GM13976 (cell line): ENCODE measurements at regions of chr3 and their contacts with region 1.

Region 1: GRCh38 chr3:62201438-62202035 is 171.8 kb downstream of the FEZF2 start:
- DNase-seq: peak; percentile 57
- CTCF ChIP-seq: peak; percentile 14

Region 2: DNA sequence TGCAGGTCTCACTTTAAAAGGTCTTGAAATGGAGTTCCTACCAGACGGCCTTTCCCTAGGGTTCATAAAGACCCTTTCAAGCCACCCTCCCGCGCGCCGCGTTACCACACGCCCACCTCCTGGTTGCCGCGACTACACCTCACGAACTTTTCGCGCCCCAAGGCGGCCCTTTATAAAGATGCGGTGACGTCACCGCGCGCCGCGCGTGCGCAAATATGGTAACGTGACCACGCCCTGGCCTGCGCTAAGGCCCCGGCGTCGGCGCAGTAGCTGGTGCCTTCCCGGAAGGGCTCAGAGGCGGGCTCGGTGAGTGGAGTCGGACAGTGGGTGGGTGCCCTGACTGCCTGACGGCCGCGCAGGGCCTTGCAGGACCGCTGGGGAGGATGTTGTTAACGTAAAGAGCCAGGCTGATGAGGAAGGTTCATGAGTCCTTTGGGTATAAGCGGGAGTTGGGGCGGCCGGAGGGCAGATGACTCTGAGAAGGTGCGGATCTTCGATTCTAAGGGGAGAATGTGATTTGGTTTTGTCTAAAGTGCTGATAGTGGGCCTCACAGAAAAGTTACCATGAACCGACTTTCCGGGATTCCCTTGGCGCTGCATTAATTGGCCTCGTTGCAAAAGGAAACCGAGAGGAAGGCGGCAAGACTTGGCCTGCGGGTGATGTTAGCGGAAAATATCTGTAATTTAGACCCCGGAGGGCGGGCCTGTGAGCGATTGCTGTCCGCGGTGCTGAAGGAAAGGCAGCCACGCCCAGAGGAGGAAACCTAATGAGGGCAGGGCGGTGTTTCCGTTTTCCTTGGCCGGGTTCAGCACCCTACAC is 117.4 kb after region 1 on chr3:
- in situ Hi-C with region 1: no loop called
- DNase-seq: peak; percentile 41
- CTCF ChIP-seq: no peak

Region 3: DNA sequence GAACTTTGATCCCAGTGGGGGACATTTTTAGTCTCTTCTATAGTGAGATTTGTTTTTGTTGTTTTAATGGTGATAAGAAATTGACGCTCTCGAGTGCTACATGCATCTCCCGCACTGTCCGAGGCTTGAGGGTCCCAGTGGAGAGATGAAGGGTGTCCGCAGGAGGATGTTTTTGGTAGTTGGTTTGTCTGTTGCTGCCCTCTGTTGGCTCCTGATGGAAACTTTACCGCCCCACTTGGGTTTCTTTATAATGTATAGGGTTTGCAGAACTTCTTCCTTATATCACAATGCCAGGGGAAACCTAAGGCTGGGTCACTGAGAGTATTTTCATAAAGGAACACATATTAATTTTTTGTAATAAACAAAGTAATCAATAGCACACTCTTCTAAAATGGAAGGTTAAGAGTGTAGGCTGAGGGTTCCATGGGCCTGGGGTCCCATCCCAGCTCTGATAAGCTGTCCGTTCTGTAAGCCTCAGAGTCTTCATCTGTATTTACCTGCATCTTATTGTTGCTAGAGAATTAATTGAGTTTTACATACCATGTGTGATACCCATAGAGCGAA is 357.1 kb after region 1 on chr3:
- in situ Hi-C with region 1: loop called (anchors 5 kb)
- DNase-seq: peak; percentile 33
- CTCF ChIP-seq: no peak

Region 4: GRCh38 chr3:63051920-63052319 is 850.4 kb after region 1 on chr3:
- in situ Hi-C with region 1: no loop called
- DNase-seq: no peak
- CTCF ChIP-seq: no peak